ENCODE measurements at regions of chr7 and their contacts with region 1.

Region 1: DNA sequence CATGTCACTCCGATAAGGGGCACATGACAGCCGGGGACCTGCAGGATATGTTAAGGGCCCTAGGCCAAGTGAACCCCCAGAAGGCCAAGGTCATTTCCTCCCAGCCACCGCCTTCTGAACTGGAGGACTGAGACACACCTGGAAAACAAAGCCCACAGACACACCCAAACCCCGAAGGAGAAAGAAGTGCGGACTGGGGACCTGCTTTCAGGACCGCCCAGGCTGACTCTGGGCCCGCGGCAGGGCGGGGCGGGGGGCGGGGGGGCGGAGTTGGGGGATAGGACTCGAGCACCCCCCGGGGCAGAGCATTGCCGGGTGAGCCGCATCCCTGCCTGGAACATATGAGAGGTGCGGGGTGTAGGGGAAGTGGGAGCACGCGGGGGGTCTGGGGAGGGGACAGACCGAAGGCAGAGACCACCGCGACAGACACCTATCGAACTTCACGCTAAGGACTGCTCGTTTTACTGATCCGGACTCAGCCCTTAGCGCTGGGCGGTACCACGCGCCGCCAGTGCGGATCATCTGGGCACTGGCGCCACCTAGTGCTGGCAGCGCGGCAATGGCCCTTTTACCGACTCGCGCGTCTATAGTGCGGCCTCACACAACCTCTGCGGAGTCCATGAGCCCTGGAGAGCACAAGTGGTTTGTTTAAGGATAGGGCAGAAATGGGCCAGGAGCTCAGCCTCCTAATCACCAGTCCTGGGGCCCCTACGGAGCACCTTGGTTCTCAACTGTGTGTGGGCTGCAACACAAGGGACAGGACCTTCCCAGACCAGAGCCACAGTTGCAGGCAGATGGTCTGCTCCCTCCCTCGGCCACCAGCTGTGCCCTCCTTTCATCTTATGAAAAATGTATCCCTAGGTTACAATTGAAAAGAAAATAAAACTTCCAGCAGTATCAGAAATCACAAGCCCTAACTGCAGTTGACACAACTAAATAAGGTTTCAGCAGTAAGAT is 157.6 kb downstream of the HERPUD2 start:
- DNase-seq: peak; percentile 93
- H3K4me3 ChIP-seq: peak overlapping the region in 7 of 8 donors; percentile 6 to 66 (median 38)
- H3K27ac ChIP-seq: no peak overlapping the region
- H3K4me1 ChIP-seq: peaks cover 0 to 10% (median 3%) of the 10 kb centered on the region in 6 donors
- H3K27me3 ChIP-seq: peaks cover 0 to 12% (median 0%) of the 10 kb centered on the region in 7 donors
- CTCF ChIP-seq: peak; percentile 55 to 96 (median 89)
- POLR2A ChIP-seq: no peak

Region 2: GRCh38 chr7:34759452-34760125 is 777.8 kb before region 1 on chr7:
- intact Hi-C with region 1: no loop called
- DNase-seq: no peak
- H3K4me3 ChIP-seq: no peak overlapping the region
- H3K27ac ChIP-seq: no peak overlapping the region
- H3K4me1 ChIP-seq: no peaks in the 10 kb centered on the region
- H3K27me3 ChIP-seq: no peaks in the 10 kb centered on the region
- CTCF ChIP-seq: peak in 5 of 11 experiments; percentile 23 to 40 (median 35)
- POLR2A ChIP-seq: no peak

Region 3: GRCh38 chr7:34823640-34824258 is 713.6 kb before region 1 on chr7:
- intact Hi-C with region 1: loop called (anchors 5 kb)
- DNase-seq: no peak
- H3K4me3 ChIP-seq: no peak overlapping the region
- H3K27ac ChIP-seq: no peak overlapping the region
- H3K4me1 ChIP-seq: no peaks in the 10 kb centered on the region
- H3K27me3 ChIP-seq: no peaks in the 10 kb centered on the region
- CTCF ChIP-seq: peak; percentile 44 to 84 (median 67)
- POLR2A ChIP-seq: no peak

Region 4: DNA sequence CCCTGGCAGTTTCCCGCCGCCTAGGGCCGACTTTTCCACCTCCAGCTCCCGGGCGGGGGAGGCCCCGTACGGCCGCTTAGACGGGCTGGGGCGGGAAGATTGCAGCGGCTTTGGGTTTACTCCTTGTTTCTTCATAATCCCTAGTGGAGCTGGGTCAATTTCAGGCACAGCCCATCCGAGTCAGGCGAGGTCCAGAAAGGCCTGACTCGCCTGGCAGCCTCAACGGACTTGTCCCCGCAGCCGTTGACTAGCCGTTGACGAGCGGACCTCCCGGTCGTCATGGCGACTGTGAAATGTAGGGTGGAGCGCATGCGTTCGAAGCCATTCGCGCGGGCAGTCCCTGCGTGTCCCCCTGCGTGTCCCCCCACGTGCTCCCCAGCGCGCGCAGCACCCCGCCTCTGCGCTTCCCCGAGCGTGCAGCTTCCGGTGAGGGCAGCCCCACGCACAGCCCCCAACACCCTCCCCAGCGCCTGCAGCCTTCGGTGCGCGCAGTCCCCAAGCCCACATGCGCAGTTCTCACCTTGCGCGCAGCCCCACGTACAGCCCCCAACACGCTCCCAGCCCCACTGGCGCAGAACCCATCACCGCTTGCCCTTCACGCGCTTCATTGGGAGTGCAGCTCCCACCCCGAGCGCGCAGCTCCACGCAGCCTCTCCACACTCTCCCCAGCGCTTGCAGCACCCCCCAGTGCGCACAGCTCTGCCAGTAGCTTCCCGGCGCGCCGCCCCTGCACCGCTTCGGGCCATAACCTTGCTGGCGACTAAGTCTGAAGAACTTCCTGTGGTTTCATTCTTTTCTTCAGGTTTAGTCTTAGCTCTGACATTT is 351.2 kb before region 1 on chr7:
- intact Hi-C with region 1: loop called (anchors 10 kb)
- DNase-seq: peak; percentile 65
- H3K4me3 ChIP-seq: peak overlapping the region in 7 of 8 donors; percentile 27 to 65 (median 33)
- H3K27ac ChIP-seq: no peak overlapping the region
- H3K4me1 ChIP-seq: peaks cover 6 to 17% (median 15%) of the 10 kb centered on the region in 6 donors
- H3K27me3 ChIP-seq: peaks cover 0 to 48% (median 22%) of the 10 kb centered on the region in 7 donors
- CTCF ChIP-seq: no peak
- POLR2A ChIP-seq: no peak

Region 5: DNA sequence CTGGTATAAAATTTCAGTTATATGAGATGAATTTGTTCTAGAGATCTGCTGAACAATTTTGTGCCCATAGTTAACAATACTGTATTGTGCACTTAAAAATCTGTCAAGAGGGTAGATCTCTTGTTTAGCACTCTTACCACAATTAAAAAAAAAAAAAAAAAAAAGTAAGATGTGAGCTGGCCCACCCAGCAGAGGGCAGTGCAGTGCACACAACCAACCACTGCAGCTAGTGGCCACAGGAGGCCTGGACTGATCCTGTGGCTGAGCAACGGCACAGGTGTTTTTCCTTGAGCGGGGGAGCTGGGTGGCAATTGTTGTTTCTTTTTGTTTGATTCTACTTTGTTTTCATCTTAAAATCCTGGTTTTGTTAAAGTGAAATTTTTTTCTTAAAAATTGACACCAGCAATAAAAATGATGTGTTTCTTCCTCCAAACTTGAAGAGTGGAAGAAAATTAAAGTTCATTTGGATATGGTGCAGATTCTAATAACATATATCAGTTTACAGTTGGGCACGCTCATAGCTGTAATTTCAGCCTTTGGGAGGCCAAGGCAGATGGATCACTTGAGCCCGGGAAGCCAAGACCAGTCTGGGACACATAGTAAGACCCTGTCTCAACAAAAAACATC is 112.4 kb before region 1 on chr7:
- intact Hi-C with region 1: loop called (anchors 10 kb)
- DNase-seq: peak; percentile 81
- H3K4me3 ChIP-seq: no peak overlapping the region
- H3K27ac ChIP-seq: no peak overlapping the region
- H3K4me1 ChIP-seq: no peaks in the 10 kb centered on the region
- H3K27me3 ChIP-seq: peaks cover 0 to 7% (median 0%) of the 10 kb centered on the region in 7 donors
- CTCF ChIP-seq: peak; percentile 39 to 77 (median 61)
- POLR2A ChIP-seq: no peak

Region 6: GRCh38 chr7:35482241-35482640 is 55.1 kb before region 1 on chr7:
- intact Hi-C with region 1: no loop called
- DNase-seq: no peak
- H3K4me3 ChIP-seq: no peak overlapping the region
- H3K27ac ChIP-seq: no peak overlapping the region
- H3K4me1 ChIP-seq: no peaks in the 10 kb centered on the region
- H3K27me3 ChIP-seq: peaks cover 0 to 26% (median 0%) of the 10 kb centered on the region in 7 donors
- CTCF ChIP-seq: no peak
- POLR2A ChIP-seq: no peak

Measured in spleen (tissue), 13 donors.